ENCODE measurements at regions of chr20 and their contacts with region 1.

Region 1: GRCh38 chr20:31951530-31952453 is at the start of gene PDRG1:
- DNase-seq: peak; percentile 98
- H3K4me3 Mint-ChIP-seq: peak within 1 kb of the TSS; percentile 96
- H3K27ac Mint-ChIP-seq: peak within 1 kb of the TSS; percentile 87
- H3K4me1 Mint-ChIP-seq: peaks cover 29% of the 10 kb centered on the region
- H3K27me3 Mint-ChIP-seq: peaks cover 10% of the 10 kb centered on the region
- total RNA-seq, gene PDRG1: 10.8 TPM

Region 2: GRCh38 chr20:31856516-31856915 is 95.3 kb before region 1 on chr20:
- CTCF ChIA-PET with region 1: interaction called, 49 read pairs
- POLR2A ChIA-PET with region 1: interaction called, 4 read pairs
- DNase-seq: no peak
- H3K4me3 Mint-ChIP-seq: no peak overlapping the region
- H3K27ac Mint-ChIP-seq: no peak overlapping the region
- H3K4me1 Mint-ChIP-seq: peaks cover 7% of the 10 kb centered on the region
- H3K27me3 Mint-ChIP-seq: peaks cover 31% of the 10 kb centered on the region

Region 3: DNA sequence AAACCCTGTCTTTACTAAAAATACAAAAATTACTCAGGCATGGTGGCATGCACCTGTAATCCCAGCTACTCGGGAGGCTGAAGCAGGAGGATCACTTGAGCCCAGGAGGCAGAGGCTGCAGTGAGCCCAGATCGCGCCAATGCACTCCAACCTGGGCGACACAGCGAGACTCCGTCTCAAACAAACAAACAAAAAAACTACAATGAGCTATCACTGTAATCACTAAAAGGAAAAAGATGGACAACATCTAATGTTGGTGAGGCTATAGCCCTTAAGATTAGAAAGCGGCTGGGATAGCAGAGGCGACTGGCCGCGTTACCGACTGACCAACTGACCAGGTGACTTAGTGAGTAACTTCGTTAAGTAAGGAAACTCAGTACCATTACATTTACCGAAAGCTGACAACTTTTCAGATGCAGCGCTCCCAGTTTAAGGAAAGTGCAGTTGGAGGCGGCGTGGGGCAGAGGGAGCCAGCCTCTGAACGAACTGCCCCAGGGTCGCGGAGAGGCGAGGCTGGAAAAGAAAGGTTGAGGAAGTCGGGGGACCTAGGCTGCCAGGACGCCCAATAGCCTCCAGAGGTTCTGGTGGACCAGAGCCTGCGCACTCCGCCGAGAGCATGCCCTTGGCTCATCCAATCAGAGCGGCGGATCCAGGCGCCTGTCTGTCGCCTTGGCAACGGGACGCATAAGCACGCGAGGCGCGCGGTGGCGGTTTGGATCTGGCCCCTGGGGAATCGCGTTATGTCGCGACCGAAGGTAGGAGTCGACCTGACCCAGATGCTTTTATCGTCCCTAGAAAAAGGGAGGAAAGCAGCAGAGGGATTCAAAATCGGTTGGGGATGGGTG is 72.4 kb before region 1 on chr20:
- CTCF ChIA-PET with region 1: interaction called, 28 read pairs
- POLR2A ChIA-PET with region 1: no interaction called
- DNase-seq: peak; percentile 85
- H3K4me3 Mint-ChIP-seq: peak overlapping the region; percentile 75
- H3K27ac Mint-ChIP-seq: peak overlapping the region; percentile 37
- H3K4me1 Mint-ChIP-seq: peaks cover 18% of the 10 kb centered on the region
- H3K27me3 Mint-ChIP-seq: peaks cover 28% of the 10 kb centered on the region

Region 4: GRCh38 chr20:31968291-31969126 is 16.7 kb after region 1 on chr20:
- CTCF ChIA-PET with region 1: interaction called, 21 read pairs
- POLR2A ChIA-PET with region 1: interaction called, 5 read pairs
- DNase-seq: peak; percentile 84
- H3K4me3 Mint-ChIP-seq: peak overlapping the region; percentile 64
- H3K27ac Mint-ChIP-seq: no peak overlapping the region
- H3K4me1 Mint-ChIP-seq: peaks cover 8% of the 10 kb centered on the region
- H3K27me3 Mint-ChIP-seq: peaks cover 38% of the 10 kb centered on the region